CD8-positive, alpha-beta T cell (primary cell): ENCODE measurements at regions of chr2 and their contacts with region 1.

Region 1: DNA sequence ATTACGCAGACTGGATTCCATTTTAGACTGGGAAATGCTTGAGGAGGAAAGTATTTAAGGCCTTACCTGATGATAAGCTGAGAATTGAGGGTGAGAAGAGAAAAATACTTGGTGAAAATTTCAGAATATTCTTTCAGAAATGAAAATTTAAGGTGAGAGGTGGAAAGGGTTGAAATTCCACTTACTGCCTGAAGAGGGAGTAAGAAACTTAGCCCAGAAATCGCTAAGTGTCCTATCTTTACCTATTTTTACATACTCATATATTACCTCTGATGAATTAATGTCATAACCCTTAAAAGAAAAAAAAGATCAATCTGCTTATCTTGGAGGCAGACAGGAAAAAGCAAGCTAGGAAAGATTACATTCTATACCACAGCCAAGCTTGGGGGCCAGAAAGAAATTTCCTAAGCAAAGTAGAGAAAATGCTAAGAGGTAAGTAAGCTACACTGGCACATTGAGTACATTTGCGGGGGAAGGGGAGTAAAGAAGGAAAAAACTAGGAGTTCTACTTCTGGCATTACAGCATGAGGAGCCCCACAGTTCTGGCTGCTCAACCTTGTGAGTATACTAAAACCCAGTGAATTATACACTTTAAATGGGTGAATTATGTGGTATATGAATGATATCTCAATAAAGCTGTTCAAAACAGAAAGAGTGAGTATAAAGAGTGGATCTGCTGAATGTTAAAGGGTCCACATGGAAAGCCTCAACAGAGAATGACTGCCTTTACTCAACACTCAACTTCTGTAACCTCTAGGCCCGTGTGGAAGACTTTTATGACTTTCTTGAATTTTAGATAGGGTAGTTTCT is 33.8 kb downstream of the SMC6 start:
- DNase-seq: peak in 2 of 9 experiments; percentile 17 to 37
- ATAC-seq: no peak
- H3K4me3 ChIP-seq: no peak overlapping the region
- H3K4me3 Mint-ChIP-seq: no peak overlapping the region
- H3K27ac ChIP-seq: no peak overlapping the region
- H3K27ac Mint-ChIP-seq: no peak overlapping the region
- H3K4me1 ChIP-seq: no peaks in the 10 kb centered on the region
- H3K4me1 Mint-ChIP-seq: no peaks in the 10 kb centered on the region
- H3K27me3 ChIP-seq: no peaks in the 10 kb centered on the region
- H3K27me3 Mint-ChIP-seq: no peaks in the 10 kb centered on the region
- CTCF ChIP-seq: peak; percentile 78

Region 2: DNA sequence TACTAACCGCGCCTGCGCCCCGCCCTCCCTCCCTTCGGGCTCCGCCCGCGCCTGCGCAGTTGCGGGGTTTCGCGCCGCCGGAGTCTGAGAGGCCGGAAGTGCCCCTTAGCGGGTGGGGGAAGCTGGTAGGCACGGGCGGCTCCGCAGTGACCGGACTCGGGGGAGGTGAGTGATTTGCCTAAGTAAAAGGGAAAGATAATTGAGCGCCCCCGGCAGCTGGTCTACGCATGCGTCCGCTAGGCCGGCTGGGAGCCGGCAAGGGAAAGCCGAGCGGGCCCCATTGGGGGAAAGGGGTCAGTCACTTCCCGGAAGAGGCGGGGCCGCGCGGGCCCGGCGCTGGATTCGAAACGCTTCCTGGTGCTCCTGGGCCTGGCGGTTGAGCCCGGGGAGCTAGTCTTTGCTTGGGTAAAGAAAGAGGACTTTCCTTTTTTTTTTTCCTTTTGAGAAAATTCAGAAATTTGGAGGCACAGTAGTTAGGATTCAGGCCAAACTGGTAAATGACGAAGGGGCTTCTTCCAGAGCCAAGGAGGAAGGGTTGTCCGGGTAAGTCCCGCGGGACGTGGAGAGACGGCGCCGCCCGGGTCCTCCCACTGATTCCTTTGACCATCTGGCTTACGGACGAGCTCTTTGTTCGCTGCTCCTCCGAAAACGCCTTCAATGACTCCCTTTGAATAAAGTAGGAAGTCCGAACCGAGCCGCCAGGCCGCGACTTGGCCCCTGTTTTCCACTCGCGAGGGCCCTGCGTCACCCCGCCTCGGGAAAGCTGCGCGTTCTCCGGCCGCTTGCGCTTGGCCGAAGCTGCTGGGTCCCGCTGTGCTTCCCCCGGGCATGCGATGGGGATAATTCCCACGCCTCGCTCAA is 34.3 kb after region 1 on chr2 and contains the starts of genes GEN1 and SMC6:
- CTCF ChIA-PET with region 1: interaction called, 4 read pairs
- POLR2A ChIA-PET with region 1: no interaction called
- intact Hi-C with region 1: loop called in 1 of 2 experiments (anchors 2 kb)
- DNase-seq: peak; percentile 79 to 95 (median 90)
- ATAC-seq: peak; percentile 82
- H3K4me3 ChIP-seq: peak within 1 kb of the TSS; percentile 82 to 87
- H3K4me3 Mint-ChIP-seq: peak within 1 kb of the TSS; percentile 92
- H3K27ac ChIP-seq: peak within 1 kb of the TSS; percentile 95 to 100
- H3K27ac Mint-ChIP-seq: peak within 1 kb of the TSS; percentile 97
- H3K4me1 ChIP-seq: peaks cover 17% of the 10 kb centered on the region
- H3K4me1 Mint-ChIP-seq: peaks cover 27% of the 10 kb centered on the region
- H3K27me3 ChIP-seq: no peaks in the 10 kb centered on the region
- H3K27me3 Mint-ChIP-seq: no peaks in the 10 kb centered on the region
- CTCF ChIP-seq: no peak
- total RNA-seq, gene GEN1: 6.3 to 7.3 TPM
- total RNA-seq, gene SMC6: 5.0 to 6.2 TPM

Region 3: DNA sequence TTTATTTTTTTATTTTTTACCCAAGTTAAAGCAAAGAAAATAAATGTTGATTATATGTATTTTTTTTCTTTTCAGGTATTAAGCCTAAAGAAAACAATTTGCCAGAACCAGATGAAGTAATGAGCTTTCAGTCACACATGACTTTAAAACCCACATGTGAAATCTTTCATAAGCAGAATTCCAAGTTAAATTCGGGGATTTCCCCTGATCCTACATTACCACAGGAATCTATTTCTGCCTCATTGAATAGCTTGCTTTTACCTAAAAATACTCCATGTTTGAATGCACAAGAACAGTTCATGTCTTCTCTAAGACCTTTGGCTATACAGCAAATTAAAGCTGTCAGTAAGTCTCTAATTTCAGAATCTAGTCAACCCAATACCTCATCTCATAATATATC is 60.8 kb after region 1 on chr2:
- CTCF ChIA-PET with region 1: no interaction called
- POLR2A ChIA-PET with region 1: no interaction called
- intact Hi-C with region 1: loop called in 1 of 2 experiments (anchors 5 kb)
- DNase-seq: no peak
- ATAC-seq: no peak
- H3K4me3 ChIP-seq: no peak overlapping the region
- H3K4me3 Mint-ChIP-seq: no peak overlapping the region
- H3K27ac ChIP-seq: no peak overlapping the region
- H3K27ac Mint-ChIP-seq: no peak overlapping the region
- H3K4me1 ChIP-seq: no peaks in the 10 kb centered on the region
- H3K4me1 Mint-ChIP-seq: no peaks in the 10 kb centered on the region
- H3K27me3 ChIP-seq: no peaks in the 10 kb centered on the region
- H3K27me3 Mint-ChIP-seq: no peaks in the 10 kb centered on the region
- CTCF ChIP-seq: no peak

Region 4: GRCh38 chr2:18159896-18160295 is 440.1 kb after region 1 on chr2:
- CTCF ChIA-PET with region 1: no interaction called
- POLR2A ChIA-PET with region 1: no interaction called
- intact Hi-C with region 1: loop called in 1 of 2 experiments (anchors 5 kb)
- DNase-seq: no peak
- ATAC-seq: no peak
- H3K4me3 ChIP-seq: no peak overlapping the region
- H3K4me3 Mint-ChIP-seq: no peak overlapping the region
- H3K27ac ChIP-seq: no peak overlapping the region
- H3K27ac Mint-ChIP-seq: no peak overlapping the region
- H3K4me1 ChIP-seq: no peaks in the 10 kb centered on the region
- H3K4me1 Mint-ChIP-seq: no peaks in the 10 kb centered on the region
- H3K27me3 ChIP-seq: no peaks in the 10 kb centered on the region
- H3K27me3 Mint-ChIP-seq: no peaks in the 10 kb centered on the region
- CTCF ChIP-seq: no peak

Region 5: DNA sequence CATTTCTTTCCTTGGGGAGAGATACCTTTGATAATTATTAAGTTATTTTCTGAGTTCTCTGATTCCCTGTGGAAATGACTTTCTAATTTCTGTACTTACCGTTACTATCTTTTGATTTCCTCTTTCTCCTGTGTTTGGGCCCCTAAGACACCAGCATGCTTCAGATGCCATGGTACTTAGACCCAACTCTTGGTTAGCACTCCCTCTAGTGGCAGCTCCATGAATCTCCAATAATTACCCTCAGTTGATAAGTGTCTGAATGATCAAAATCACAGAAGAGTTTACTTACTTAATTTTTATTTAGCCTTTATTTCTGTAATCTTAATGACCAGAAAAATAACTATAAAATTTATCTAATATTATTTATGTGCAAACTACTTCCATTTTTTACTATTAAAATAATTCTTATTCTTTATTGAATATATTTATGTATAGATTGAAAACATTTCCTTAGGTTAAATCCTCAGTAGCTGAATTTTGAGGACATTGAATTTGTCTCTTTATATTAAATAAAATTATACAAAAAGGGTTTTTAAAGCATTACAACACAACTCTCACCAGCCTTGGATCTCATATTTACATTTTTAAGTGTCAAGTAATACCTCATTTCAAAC is 459.1 kb after region 1 on chr2:
- CTCF ChIA-PET with region 1: interaction called, 9 read pairs
- POLR2A ChIA-PET with region 1: no interaction called
- intact Hi-C with region 1: loop called in 1 of 2 experiments (anchors 1 kb)
- DNase-seq: peak in 5 of 9 experiments; percentile 3 to 45 (median 14)
- ATAC-seq: no peak
- H3K4me3 ChIP-seq: no peak overlapping the region
- H3K4me3 Mint-ChIP-seq: no peak overlapping the region
- H3K27ac ChIP-seq: no peak overlapping the region
- H3K27ac Mint-ChIP-seq: no peak overlapping the region
- H3K4me1 ChIP-seq: no peaks in the 10 kb centered on the region
- H3K4me1 Mint-ChIP-seq: no peaks in the 10 kb centered on the region
- H3K27me3 ChIP-seq: no peaks in the 10 kb centered on the region
- H3K27me3 Mint-ChIP-seq: peaks cover 2% of the 10 kb centered on the region
- CTCF ChIP-seq: peak; percentile 66

Region 6: GRCh38 chr2:18378020-18378653 is 658.4 kb after region 1 on chr2:
- CTCF ChIA-PET with region 1: interaction called, 3 read pairs
- POLR2A ChIA-PET with region 1: no interaction called
- intact Hi-C with region 1: loop called in 1 of 2 experiments (anchors 1 kb)
- DNase-seq: peak in 7 of 9 experiments; percentile 4 to 41 (median 23)
- ATAC-seq: no peak
- H3K4me3 ChIP-seq: no peak overlapping the region
- H3K4me3 Mint-ChIP-seq: no peak overlapping the region
- H3K27ac ChIP-seq: no peak overlapping the region
- H3K27ac Mint-ChIP-seq: no peak overlapping the region
- H3K4me1 ChIP-seq: no peaks in the 10 kb centered on the region
- H3K4me1 Mint-ChIP-seq: no peaks in the 10 kb centered on the region
- H3K27me3 ChIP-seq: no peaks in the 10 kb centered on the region
- H3K27me3 Mint-ChIP-seq: peaks cover 17% of the 10 kb centered on the region
- CTCF ChIP-seq: peak; percentile 79